RWPE1 (cell line): ENCODE measurements at regions of chr1 and their contacts with region 1.

Region 1: DNA sequence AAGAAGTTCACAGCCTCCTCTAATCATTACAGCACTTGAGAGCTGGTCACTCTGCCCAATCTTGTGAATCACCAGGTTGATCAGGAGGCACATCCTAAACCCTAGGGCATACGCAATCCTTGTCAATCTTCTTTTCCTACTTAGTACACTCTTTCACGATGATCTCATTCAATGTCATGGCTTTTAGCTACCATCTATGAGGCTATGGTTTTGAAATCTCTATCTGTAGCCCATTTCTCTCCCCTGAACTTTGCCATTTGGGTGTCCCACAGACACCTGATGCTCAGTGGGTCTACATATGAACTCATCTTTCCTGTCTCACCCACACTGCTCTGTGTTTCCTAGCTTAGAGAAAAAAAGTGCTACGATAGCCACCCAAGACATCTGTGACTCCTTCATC is 1.9 kb upstream of the MED18 start:
- DNase-seq: peak; percentile 61
- H3K27ac ChIP-seq: no peak overlapping the region
- CTCF ChIP-seq: no peak

Region 2: DNA sequence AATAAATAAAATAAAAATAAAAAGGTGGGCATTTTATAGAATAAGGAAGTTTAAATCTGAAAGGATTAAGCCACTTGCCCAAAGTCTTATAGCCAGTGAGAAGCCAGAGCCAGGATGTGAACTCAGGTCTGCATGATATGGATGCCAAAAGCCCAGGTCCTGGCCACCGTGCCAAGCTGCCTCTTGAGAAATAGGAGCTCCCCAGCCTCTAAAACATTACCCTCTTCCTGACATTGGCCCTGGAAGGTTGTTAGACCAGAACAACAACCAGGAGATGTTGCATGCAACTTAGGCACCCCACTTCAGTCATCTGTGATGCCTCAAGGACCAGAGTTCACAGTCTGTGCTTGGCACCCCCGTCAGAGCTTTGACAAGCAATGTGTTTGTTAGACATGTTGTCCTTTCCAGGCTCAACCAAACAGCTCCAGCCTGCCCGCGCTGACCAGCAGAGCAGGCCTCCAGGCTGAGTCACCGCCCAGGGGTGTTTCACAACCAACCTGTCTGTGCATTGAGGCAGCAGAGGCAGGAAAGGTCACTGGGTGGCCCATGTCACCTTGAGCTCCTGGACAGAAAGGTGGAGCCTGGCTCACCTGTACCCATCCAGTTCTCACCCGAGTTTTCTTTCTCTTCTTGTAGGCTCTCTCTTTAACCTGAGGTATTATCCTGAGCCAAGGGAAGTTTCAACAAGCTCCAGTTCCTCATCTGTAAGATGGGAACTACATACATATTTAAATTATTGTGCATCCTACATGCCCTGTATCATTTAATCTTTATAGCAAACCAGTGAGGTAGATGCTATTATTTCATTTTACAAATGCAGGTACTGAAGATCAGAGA is 13.1 kb before region 1 on chr1:
- CTCF ChIA-PET with region 1: no interaction called
- POLR2A ChIA-PET with region 1: interaction called, 10 read pairs
- DNase-seq: peak; percentile 60
- H3K27ac ChIP-seq: peak overlapping the region; percentile 63
- CTCF ChIP-seq: no peak